Right ventricle myocardium superior (tissue), 1 donor: ENCODE measurements at regions of chr6 and their contacts with region 1.

Region 1: GRCh38 chr6:117555882-117556498 is 46.3 kb downstream of the GOPC start:
- DNase-seq: no peak
- ATAC-seq: peak; percentile 51

Region 2: GRCh38 chr6:116963972-116964371 is 592.0 kb before region 1 on chr6:
- intact Hi-C with region 1: no loop called
- DNase-seq: no peak
- ATAC-seq: no peak

Region 3: GRCh38 chr6:117449549-117450439 is 106.2 kb before region 1 on chr6:
- intact Hi-C with region 1: loop called (anchors 5 kb)
- DNase-seq: no peak
- ATAC-seq: peak; percentile 43